Calu3 (cell line): ENCODE measurements at regions of chr5 and their contacts with region 1.

Region 1: DNA sequence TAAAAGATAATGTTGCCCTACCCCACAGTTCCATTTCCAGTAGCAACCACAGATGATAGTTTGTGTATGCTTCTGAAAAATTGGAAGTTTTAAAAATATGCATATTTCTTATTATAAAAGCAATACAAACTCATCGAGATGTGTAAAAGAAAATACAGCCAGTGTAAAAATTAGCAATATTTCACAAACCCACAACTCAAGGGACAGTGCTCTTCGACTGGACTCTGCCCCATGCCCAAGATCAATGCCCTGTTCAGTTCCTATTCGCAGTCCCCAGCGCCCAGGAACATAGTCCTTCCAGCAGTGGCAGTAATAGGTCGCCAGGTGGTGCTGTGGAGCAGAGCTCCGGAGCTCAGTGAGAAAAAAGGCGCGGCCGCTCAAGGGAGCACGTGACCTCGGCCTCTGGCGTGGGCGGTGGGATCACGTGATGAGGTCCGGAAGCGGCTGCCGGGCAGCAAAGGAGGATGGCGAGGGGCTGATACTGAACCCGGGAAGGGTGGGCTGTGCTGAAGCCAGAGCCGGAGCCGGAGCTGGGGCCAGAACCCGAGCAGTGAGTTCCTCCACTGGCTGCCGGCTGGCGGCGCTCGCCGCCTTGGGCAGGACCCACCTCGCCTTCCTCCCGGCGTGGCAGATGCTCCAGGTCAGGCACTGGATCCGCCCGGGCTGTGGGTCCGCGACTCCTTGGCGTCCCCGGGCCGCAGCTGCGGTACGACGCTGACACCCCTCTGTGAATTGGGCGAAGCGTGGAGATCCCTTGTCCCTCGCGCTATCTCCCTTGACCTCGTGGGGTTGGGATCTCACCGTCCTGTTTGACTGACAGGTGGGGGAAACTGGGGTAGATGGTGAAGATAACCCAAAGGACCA is at the start of gene SLC36A1:
- DNase-seq: peak; percentile 96
- H3K4me3 Mint-ChIP-seq: peak within 1 kb of the TSS; percentile 84
- H3K27ac Mint-ChIP-seq: peak within 1 kb of the TSS; percentile 84
- H3K4me1 Mint-ChIP-seq: peaks cover 26% of the 10 kb centered on the region
- H3K27me3 Mint-ChIP-seq: peaks cover 24% of the 10 kb centered on the region
- CTCF ChIP-seq: peak; percentile 96
- total RNA-seq, gene SLC36A1: 11.4 and 12.3 TPM in 2 replicates

Region 2: GRCh38 chr5:151002250-151002649 is 445.2 kb before region 1 on chr5:
- CTCF ChIA-PET with region 1: no interaction called
- intact Hi-C with region 1: loop called (anchors 10 kb)
- DNase-seq: peak; percentile 52
- H3K4me3 Mint-ChIP-seq: no peak overlapping the region
- H3K27ac Mint-ChIP-seq: no peak overlapping the region
- H3K4me1 Mint-ChIP-seq: no peaks in the 10 kb centered on the region
- H3K27me3 Mint-ChIP-seq: peaks cover 26% of the 10 kb centered on the region
- CTCF ChIP-seq: no peak

Region 3: DNA sequence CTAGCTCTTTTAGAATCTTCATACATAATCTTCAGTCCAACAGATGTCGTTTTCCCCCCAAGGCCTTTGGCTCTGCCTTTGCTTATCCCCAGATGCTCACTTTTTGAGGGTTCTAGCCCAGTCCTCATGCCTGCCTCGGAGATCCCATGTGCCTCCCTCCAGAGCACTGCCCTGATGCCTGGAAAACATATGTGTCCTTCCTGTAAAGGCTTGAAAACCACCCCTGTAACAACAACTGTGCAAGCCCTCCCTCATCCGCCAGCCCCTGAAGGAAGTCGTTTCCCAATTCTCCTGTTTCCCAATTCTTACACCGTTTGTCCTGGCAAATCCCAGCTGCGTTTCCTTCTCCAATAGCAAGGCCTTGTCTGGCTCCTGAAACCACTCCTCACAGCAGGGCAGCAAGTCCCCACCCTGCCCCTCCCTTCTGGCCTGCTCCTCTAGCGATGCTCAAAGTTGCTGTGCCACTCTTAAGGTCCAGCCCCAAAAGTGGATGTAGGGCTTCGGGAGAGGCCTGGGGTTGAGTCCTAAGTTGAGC is 52.2 kb after region 1 on chr5:
- CTCF ChIA-PET with region 1: interaction called, 4 read pairs
- intact Hi-C with region 1: loop called (anchors 1 kb)
- DNase-seq: no peak
- H3K4me3 Mint-ChIP-seq: no peak overlapping the region
- H3K27ac Mint-ChIP-seq: no peak overlapping the region
- H3K4me1 Mint-ChIP-seq: no peaks in the 10 kb centered on the region
- H3K27me3 Mint-ChIP-seq: no peaks in the 10 kb centered on the region
- CTCF ChIP-seq: no peak

Region 4: GRCh38 chr5:151523335-151523734 is 75.9 kb after region 1 on chr5:
- CTCF ChIA-PET with region 1: interaction called, 16 read pairs
- intact Hi-C with region 1: loop called (anchors 1 kb)
- DNase-seq: peak; percentile 48
- H3K4me3 Mint-ChIP-seq: no peak overlapping the region
- H3K27ac Mint-ChIP-seq: no peak overlapping the region
- H3K4me1 Mint-ChIP-seq: no peaks in the 10 kb centered on the region
- H3K27me3 Mint-ChIP-seq: peaks cover 39% of the 10 kb centered on the region
- CTCF ChIP-seq: peak; percentile 63

Region 5: GRCh38 chr5:151740336-151740942 is 293.0 kb after region 1 on chr5:
- CTCF ChIA-PET with region 1: no interaction called
- intact Hi-C with region 1: loop called (anchors 2 kb)
- DNase-seq: peak; percentile 74
- H3K4me3 Mint-ChIP-seq: peak overlapping the region; percentile 18
- H3K27ac Mint-ChIP-seq: peak overlapping the region; percentile 60
- H3K4me1 Mint-ChIP-seq: peaks cover 56% of the 10 kb centered on the region
- H3K27me3 Mint-ChIP-seq: no peaks in the 10 kb centered on the region
- CTCF ChIP-seq: peak; percentile 88

Region 6: GRCh38 chr5:151771259-151772028 is 324.0 kb after region 1 on chr5 and contains the start of gene G3BP1:
- CTCF ChIA-PET with region 1: interaction called, 4 read pairs
- intact Hi-C with region 1: loop called (anchors 10 kb)
- DNase-seq: peak; percentile 100
- H3K4me3 Mint-ChIP-seq: no peak within 1 kb of the TSS
- H3K27ac Mint-ChIP-seq: no peak within 1 kb of the TSS
- H3K4me1 Mint-ChIP-seq: peaks cover 15% of the 10 kb centered on the region
- H3K27me3 Mint-ChIP-seq: no peaks in the 10 kb centered on the region
- CTCF ChIP-seq: peak; percentile 32
- total RNA-seq, gene G3BP1: 356 and 393 TPM in 2 replicates